Heart right ventricle (tissue), 16 donors: ENCODE measurements at regions of chr10 and their contacts with region 1.

Region 1: GRCh38 chr10:73750819-73751218 is 6.6 kb downstream of the SEC24C start:
- DNase-seq: no peak
- ATAC-seq: peak in 1 of 8 donors; percentile 36
- H3K4me3 ChIP-seq: no peak overlapping the region
- H3K27ac ChIP-seq: no peak overlapping the region
- H3K4me1 ChIP-seq: peaks cover 0 to 42% (median 33%) of the 10 kb centered on the region in 9 donors
- H3K27me3 ChIP-seq: no peaks in the 10 kb centered on the region
- CTCF ChIP-seq: no peak

Region 2: DNA sequence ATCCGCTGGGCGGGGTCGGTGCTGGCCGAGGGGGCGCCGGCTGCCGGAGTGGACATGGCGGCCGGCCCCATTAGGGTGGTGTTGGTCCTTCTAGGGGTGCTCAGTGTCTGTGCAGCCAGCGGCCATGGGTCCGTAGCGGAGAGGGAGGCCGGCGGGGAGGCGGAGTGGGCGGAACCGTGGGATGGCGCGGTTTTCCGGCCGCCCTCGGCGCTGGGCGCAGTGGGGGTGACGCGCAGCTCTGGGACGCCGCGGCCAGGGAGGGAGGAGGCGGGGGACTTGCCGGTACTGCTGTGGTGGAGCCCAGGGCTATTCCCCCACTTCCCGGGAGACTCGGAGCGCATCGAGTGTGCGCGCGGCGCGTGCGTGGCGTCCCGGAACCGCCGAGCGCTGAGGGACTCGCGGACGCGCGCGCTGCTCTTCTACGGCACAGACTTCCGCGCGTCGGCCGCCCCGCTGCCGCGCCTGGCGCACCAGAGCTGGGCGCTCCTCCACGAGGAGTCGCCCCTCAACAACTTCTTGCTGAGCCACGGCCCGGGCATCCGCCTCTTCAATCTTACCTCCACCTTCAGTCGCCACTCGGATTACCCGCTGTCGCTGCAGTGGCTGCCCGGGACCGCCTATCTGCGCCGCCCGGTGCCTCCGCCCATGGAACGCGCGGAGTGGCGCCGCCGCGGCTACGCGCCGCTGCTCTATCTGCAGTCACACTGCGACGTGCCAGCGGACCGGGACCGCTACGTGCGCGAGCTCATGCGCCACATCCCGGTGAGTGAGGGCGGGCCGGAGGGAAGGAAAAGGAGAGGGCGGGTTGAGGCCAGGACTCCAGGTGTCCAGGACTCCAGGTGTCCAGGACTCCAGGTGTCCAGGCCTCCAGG is 21.7 kb after region 1 on chr10:
- intact Hi-C with region 1: loop called in 1 of 10 experiments (anchors 2 kb)
- DNase-seq: peak; percentile 76 to 83
- ATAC-seq: peak; percentile 84 to 94 (median 90)
- H3K4me3 ChIP-seq: peak overlapping the region; percentile 71 to 99 (median 83)
- H3K27ac ChIP-seq: peak overlapping the region; percentile 86 to 100 (median 98)
- H3K4me1 ChIP-seq: peaks cover 24 to 47% (median 42%) of the 10 kb centered on the region in 9 donors
- H3K27me3 ChIP-seq: no peaks in the 10 kb centered on the region
- CTCF ChIP-seq: peak in 5 of 9 donors; percentile 20 to 43 (median 39)

Region 3: DNA sequence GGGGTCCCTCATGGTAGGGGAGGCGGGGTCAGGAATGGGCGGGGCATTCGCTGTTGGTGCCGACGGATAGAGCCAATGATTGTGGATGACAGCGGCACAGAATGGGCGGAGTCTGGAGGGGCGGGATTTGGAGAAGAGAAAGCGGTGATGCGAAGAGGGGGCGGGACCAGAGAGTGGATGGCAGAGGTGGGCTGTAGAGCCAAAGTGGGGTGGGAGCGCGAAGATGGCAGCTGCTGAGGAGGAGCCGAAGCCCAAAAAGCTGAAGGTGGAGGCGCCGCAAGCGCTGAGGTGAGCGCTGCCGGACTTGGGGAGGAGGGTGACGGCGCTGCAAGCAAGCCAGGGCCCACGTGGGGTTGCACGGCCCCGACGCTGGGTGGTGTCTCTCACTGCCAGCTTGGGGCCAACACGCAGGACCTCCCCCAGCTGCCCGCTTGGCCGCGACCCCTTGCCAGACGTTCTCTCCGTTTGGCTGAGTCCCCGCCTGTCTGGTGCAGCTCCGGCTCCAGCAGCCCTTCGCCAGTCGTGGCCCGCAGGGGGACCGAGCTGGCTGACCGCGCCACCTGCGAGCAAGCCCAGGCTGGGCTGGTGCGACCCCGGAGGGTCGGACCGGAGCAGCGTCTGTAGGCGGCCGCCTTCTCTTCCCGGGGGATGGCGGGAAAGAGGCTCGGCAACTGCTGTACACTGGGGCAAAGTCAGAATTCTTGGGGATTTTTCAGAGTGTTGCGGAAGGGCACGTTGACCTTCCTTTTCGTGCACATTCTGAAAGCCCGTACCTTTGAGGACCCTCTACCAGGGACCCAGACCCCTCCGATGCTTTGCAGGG is 400.4 kb after region 1 on chr10 and contains the start of gene ADK:
- intact Hi-C with region 1: no loop called
- DNase-seq: peak; percentile 99 to 100
- ATAC-seq: peak; percentile 96 to 99 (median 98)
- H3K4me3 ChIP-seq: peak within 1 kb of the TSS; percentile 56 to 99 (median 76)
- H3K27ac ChIP-seq: peak within 1 kb of the TSS; percentile 62 to 93 (median 90)
- H3K4me1 ChIP-seq: peaks cover 0 to 61% (median 40%) of the 10 kb centered on the region in 9 donors
- H3K27me3 ChIP-seq: no peaks in the 10 kb centered on the region
- CTCF ChIP-seq: peak in 4 of 9 donors; percentile 37 to 62 (median 42)
- total RNA-seq, gene ADK: 25.5 to 50.0 (median 40.1) TPM